ENCODE measurements at regions of chr1 and their contacts with region 1.

Region 1: DNA sequence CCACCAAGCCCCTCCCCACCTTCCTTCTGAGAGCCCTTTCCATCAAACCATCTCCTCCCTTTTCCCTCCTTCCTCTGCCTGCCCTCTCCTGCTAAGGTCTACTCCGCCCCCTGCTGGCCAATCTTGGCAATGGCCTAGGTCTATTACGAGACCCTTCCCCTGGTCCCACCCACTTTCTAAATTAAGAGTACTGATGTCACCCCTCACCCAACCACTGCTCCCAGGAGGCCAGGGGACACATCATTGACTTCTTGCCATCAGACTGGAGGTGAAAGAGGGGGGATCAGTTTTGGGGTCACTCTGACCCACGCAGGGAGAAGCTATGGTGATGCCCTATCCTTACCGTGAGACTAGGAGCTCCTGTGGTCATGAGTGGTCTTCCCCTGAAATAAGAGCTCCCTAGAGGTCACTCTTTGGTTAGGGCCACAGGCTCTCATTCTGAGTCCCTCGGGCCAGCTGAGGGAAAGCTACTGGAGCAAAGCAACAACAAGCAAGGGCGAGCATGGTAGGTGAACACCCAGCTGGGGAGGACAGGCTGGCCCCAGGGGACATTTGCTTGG is 34.6 kb upstream of the S100A7 start:
- DNase-seq: no peak
- H3K4me3 ChIP-seq: no peak overlapping the region
- CTCF ChIP-seq: peak; percentile 86

Region 2: GRCh38 chr1:153231363-153231762 is 263.7 kb before region 1 on chr1:
- CTCF ChIA-PET with region 1: no interaction called
- POLR2A ChIA-PET with region 1: no interaction called
- DNase-seq: no peak
- H3K4me3 ChIP-seq: no peak overlapping the region
- CTCF ChIP-seq: no peak

Region 3: DNA sequence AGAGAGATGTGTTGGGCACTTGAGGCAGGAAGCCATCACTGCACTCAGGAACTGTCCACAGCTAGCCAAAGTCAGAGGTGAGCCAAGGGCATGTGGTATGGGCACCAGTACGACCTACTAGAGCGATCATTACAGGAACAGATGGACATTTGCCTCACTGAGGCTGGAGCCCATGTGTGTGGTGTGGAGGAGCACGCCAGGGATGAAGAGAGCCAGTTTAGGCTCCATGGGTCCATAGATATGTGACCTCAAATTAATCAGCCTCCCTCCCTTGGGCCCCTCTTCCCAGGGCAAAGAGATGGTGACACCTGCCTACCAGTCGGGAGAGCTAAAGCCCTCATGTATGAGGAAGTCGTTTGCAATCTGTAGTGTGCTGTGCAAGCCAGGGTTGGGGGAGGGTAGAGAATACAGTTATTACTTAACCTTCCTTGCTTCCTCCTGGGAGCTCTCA is 150.5 kb before region 1 on chr1:
- CTCF ChIA-PET with region 1: interaction called, 527 read pairs
- POLR2A ChIA-PET with region 1: no interaction called
- DNase-seq: no peak
- H3K4me3 ChIP-seq: no peak overlapping the region
- CTCF ChIP-seq: no peak

Region 4: DNA sequence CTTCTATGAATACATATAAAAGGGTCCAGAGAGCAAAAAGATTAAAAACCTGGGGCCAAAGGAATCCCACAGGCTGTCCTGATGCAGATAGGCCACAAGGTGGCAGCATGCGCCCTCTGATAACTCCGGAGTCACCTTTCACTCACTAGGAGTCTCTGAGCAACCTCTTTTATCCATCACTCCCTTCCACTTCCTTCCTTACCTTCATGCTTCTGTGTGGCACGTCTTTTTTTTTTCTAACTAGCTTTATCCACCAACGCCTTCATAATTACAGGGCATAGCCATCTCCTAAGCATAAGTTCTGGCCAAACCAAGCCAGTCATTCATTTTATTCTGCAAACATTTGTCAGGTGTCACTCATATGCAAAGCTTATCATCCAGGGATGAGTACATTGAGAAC is 142.5 kb before region 1 on chr1:
- CTCF ChIA-PET with region 1: interaction called, 527 read pairs
- POLR2A ChIA-PET with region 1: no interaction called
- DNase-seq: peak; percentile 2
- H3K4me3 ChIP-seq: no peak overlapping the region
- CTCF ChIP-seq: peak; percentile 82

Region 5: DNA sequence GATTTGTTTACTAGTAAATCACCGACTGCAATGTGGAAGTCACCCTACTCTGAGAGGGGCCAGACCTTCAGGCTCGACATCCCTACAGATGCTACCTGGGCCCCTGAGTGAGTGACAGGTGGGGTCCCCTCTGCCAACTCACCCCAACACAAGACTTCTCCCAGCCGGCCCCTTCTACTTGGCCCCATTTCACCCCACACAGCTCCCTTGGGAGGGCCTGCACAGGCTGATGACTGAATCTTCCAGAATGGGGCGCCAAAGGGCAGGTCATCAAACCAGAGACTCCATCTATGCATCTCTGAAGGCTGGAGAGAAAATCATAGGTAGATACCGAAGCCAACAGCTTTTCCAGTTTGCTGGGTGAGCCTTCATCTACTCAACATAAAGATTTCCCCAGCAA is 94.8 kb before region 1 on chr1:
- CTCF ChIA-PET with region 1: interaction called, 11 read pairs
- POLR2A ChIA-PET with region 1: no interaction called
- DNase-seq: no peak
- H3K4me3 ChIP-seq: no peak overlapping the region
- CTCF ChIP-seq: no peak

Region 6: GRCh38 chr1:153465811-153466636 is 29.0 kb before region 1 on chr1:
- CTCF ChIA-PET with region 1: interaction called, 56 read pairs
- POLR2A ChIA-PET with region 1: no interaction called
- DNase-seq: no peak
- H3K4me3 ChIP-seq: no peak overlapping the region
- CTCF ChIP-seq: peak; percentile 76

Region 7: DNA sequence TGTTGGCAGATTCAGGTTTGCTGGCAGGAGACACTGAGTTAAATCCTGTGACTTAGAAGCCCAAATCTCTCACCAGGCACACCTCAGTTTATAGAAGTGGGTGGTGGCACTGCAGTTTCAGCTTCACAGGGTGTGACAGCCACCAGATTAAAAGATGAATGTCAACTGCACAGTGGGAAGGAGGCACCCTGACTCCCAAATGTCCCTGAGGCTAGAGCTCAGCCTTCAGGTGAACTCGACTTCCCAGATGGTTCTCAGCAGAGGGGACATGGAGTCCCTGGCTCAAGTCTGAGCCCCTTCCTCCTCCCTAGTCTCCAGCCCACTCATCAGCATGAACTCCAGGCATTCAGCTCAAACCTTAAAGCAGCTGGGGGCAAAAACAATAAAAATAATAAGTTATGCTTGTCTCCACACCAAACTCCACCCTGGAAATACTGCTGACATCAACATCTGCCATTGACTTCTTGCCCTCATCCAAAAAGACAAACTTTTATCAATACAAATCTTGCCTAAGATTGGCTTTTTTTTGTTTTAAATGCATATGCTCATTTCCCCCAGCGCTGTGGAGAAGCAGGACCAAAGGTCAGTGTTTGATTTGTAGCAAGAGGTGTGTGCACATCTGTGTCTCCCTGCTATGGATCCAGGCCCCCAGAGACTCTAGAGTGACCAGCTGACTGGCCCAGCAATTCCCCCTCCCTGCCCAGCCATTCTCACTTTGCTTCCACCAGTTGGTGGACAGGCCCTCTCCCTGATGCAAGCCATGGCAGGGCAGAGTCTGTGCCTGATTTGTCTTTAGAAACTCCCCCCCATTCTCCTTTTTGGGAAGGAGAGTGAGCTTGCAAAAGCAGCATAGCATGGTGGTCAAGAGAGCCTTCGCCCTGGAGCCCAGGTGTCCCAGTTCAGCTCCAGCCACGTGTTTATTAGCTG is 16.1 kb before region 1 on chr1:
- CTCF ChIA-PET with region 1: interaction called, 44 read pairs
- POLR2A ChIA-PET with region 1: no interaction called
- DNase-seq: no peak
- H3K4me3 ChIP-seq: no peak overlapping the region
- CTCF ChIP-seq: no peak